Activated CD4-positive, alpha-beta T cell treated with anti-CD3 and anti-CD28 coated beads for 36 hours (primary cell): ENCODE measurements at regions of chr10 and their contacts with region 1.

Region 1: DNA sequence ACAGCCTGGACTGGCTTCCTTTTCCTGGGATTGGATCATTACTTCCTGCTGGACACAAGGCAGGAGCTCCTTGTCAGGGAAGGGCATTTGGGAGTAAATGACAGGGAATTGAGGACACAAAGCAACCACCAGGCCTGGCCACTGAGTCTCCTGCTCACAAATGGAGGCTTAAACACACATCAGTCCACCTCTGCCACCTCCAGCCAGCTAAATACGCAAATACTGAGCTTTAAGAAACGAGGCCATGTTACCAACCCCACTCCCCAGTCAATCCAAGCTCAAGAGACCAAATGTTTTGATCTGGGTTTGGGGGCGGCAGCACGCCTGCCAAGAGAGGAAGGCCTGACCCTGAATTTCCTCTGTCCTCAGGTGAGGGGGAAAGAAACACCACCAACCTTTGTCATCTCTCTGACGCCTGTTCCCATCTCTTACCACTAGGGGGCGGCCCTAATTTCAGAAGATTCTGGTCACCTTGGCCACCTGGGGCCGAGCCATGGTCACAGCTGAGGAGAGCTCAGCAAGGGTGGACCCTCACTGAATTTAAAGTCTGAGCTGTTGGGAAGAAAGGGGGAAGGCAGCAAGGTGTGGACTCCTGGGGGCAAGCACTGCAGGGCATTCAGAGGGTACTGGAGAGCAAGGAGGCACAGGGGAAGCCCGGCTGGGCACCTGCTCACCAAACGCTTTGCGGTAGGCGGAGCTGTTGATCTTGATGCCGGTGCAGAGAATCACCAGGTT is 16.5 kb downstream of the AIFM2 start:
- DNase-seq: peak; percentile 71
- ATAC-seq: peak; percentile 88
- H3K4me3 Mint-ChIP-seq: no peak overlapping the region
- H3K27ac Mint-ChIP-seq: no peak overlapping the region
- H3K4me1 Mint-ChIP-seq: peaks cover 4% of the 10 kb centered on the region
- H3K27me3 Mint-ChIP-seq: no peaks in the 10 kb centered on the region

Region 2: GRCh38 chr10:70093335-70093944 is 22.7 kb before region 1 on chr10:
- CTCF ChIA-PET with region 1: interaction called, 37 read pairs
- POLR2A ChIA-PET with region 1: no interaction called
- intact Hi-C with region 1: no loop called
- DNase-seq: peak; percentile 52
- ATAC-seq: peak; percentile 92
- H3K4me3 Mint-ChIP-seq: peak overlapping the region; percentile 72
- H3K27ac Mint-ChIP-seq: peak overlapping the region; percentile 80
- H3K4me1 Mint-ChIP-seq: peaks cover 36% of the 10 kb centered on the region
- H3K27me3 Mint-ChIP-seq: no peaks in the 10 kb centered on the region